Stomach (tissue), 19 donors: ENCODE measurements at regions of chr3 and their contacts with region 1.

Region 1: GRCh38 chr3:154252759-154253638 is 71.3 kb downstream of the DHX36 start:
- DNase-seq: peak; percentile 91 to 96
- H3K4me3 ChIP-seq: no peak overlapping the region
- H3K27ac ChIP-seq: no peak overlapping the region
- H3K4me1 ChIP-seq: peaks cover 0 to 22% (median 5%) of the 10 kb centered on the region in 4 donors
- H3K27me3 ChIP-seq: no peaks in the 10 kb centered on the region
- CTCF ChIP-seq: peak in 6 of 7 experiments; percentile 29 to 93 (median 84)
- EP300 ChIP-seq: no peak
- POLR2A ChIP-seq: no peak

Region 2: DNA sequence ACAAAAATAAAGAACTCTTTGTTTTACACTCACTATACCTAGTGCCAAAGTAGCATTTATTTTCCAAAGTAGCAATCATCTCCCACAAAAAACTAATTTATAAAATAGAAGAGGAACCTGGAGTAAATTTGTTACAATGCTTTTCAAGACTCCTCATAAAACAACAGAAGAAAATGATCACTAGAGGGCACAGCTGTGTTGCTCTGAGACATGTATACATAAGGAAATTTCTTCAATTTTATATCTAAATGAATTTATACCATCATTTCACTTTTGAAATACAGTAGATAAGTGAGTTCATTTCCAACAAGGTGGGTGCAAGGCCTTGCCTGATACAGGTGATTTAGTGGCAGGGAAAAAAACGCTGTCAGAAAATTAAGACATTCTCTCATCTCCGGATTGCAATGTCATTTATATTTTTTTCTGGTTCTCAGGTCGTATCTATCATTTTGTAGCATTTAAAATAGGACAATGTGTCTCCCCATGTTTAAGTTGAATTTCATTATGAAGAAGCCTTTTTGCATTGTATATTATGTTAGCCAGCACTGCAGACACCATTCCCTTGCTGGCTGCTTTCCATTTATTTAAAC is 157.1 kb before region 1 on chr3:
- intact Hi-C with region 1: loop called (anchors 5 kb)
- DNase-seq: peak in 1 of 2 donors; percentile 51
- H3K4me3 ChIP-seq: no peak overlapping the region
- H3K27ac ChIP-seq: no peak overlapping the region
- H3K4me1 ChIP-seq: peaks cover 0 to 5% (median 0%) of the 10 kb centered on the region in 4 donors
- H3K27me3 ChIP-seq: no peaks in the 10 kb centered on the region
- CTCF ChIP-seq: peak in 5 of 7 experiments; percentile 21 to 42 (median 28)
- EP300 ChIP-seq: no peak
- POLR2A ChIP-seq: no peak

Region 3: GRCh38 chr3:154384479-154384878 is 131.5 kb after region 1 on chr3:
- intact Hi-C with region 1: no loop called
- DNase-seq: peak in 1 of 2 donors; percentile 33
- H3K4me3 ChIP-seq: no peak overlapping the region
- H3K27ac ChIP-seq: no peak overlapping the region
- H3K4me1 ChIP-seq: no peaks in the 10 kb centered on the region
- H3K27me3 ChIP-seq: no peaks in the 10 kb centered on the region
- CTCF ChIP-seq: no peak
- EP300 ChIP-seq: no peak
- POLR2A ChIP-seq: no peak